ENCODE measurements at regions of chr9 and their contacts with region 1.

Region 1: DNA sequence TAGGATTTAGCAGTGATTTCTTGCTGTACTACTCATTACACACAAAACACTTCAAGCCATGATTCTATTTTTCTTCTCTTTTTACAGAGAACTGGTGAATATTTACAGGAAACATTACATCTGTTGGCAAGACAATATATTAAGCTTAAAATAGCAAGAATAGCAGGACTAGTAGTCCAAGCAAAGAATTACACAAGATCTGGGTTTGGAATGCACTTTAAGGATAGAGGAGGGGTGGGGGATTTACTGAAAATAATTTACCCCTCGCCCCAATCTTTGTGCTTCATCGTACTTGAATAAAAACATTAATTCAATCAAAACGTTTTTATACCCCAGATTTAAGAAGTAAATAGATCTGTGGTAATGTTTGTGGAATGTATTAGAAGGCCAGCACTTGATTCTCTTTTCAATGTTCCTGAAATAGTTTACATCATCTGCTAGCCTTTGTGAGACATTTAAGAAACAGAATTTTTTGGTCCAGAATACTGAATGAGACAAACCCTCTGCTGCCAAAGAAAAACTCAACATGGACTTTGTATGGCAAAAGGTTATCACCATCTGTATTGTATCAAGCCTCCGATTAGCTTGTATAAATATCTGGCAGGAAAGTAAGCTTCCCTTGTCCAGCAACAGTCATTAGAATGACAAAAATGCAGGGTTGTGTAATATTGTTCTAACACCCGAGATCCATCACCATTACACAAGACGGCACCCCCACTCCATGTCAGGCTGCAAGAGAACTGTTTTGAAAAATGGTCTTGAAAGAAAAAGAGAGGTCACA is 23.8 kb downstream of the SVEP1 start:
- DNase-seq: peak; percentile 82
- H3K4me3 Mint-ChIP-seq: peak overlapping the region; percentile 19
- H3K27ac Mint-ChIP-seq: peak overlapping the region; percentile 59
- H3K4me1 Mint-ChIP-seq: peaks cover 29% of the 10 kb centered on the region
- H3K27me3 Mint-ChIP-seq: no peaks in the 10 kb centered on the region
- CTCF ChIP-seq: no peak

Region 2: DNA sequence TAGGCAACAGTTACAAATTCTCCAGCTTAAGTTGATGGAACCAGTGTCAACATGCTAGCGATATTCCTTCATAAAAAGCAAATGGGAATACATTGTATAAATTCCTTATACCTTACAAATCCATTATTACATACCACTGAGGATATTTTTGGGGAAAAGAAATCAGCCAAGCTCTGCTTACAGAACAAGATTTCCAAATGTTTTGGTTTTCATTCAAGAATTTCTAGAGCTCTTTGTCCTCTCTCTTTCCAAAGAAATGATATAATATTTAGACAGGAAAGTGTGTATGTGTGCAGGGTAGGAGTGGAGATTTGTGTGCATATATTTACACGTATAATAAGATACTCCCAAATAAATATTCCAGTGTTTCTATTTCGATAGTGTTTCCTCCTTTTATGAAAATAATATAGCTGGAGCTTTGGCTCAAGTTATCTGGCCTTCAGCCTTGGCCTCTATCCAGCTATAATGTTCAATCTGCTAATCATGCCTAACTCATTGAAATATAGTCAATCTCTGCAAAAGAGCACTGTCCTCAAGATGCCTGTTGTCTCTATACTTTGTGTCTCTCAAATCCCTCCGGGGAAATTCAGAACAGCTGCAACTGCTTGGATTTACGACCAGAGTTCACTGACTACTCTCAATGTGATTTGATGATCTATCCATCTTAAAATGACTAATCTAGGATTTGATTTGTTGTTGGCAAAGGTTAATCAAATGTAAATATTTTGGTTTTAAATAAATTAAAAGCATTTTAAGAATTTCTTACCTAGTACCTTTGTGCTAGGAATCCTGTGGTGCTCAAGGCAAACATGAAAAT is 17.3 kb before region 1 on chr9:
- CTCF ChIA-PET with region 1: no interaction called
- POLR2A ChIA-PET with region 1: interaction called, 16 read pairs
- intact Hi-C with region 1: no loop called
- DNase-seq: peak; percentile 52
- H3K4me3 Mint-ChIP-seq: no peak overlapping the region
- H3K27ac Mint-ChIP-seq: no peak overlapping the region
- H3K4me1 Mint-ChIP-seq: peaks cover 28% of the 10 kb centered on the region
- H3K27me3 Mint-ChIP-seq: no peaks in the 10 kb centered on the region
- CTCF ChIP-seq: no peak

Region 3: GRCh38 chr9:110566156-110566555 is 10.4 kb after region 1 on chr9:
- CTCF ChIA-PET with region 1: interaction called, 3 read pairs
- POLR2A ChIA-PET with region 1: interaction called, 10 read pairs
- intact Hi-C with region 1: no loop called
- DNase-seq: no peak
- H3K4me3 Mint-ChIP-seq: no peak overlapping the region
- H3K27ac Mint-ChIP-seq: no peak overlapping the region
- H3K4me1 Mint-ChIP-seq: peaks cover 9% of the 10 kb centered on the region
- H3K27me3 Mint-ChIP-seq: no peaks in the 10 kb centered on the region
- CTCF ChIP-seq: no peak

Region 4: GRCh38 chr9:110579034-110579861 is 23.5 kb after region 1 on chr9 and contains the start of gene SVEP1:
- CTCF ChIA-PET with region 1: interaction called, 5 read pairs
- POLR2A ChIA-PET with region 1: interaction called, 26 read pairs
- intact Hi-C with region 1: no loop called
- DNase-seq: peak; percentile 67
- H3K4me3 Mint-ChIP-seq: peak within 1 kb of the TSS; percentile 98
- H3K27ac Mint-ChIP-seq: peak within 1 kb of the TSS; percentile 37
- H3K4me1 Mint-ChIP-seq: peaks cover 43% of the 10 kb centered on the region
- H3K27me3 Mint-ChIP-seq: no peaks in the 10 kb centered on the region
- CTCF ChIP-seq: no peak
- total RNA-seq, gene SVEP1: 9.9 and 21.9 TPM in 2 replicates